ENCODE measurements at regions of chr2 and their contacts with region 1.

Region 1: DNA sequence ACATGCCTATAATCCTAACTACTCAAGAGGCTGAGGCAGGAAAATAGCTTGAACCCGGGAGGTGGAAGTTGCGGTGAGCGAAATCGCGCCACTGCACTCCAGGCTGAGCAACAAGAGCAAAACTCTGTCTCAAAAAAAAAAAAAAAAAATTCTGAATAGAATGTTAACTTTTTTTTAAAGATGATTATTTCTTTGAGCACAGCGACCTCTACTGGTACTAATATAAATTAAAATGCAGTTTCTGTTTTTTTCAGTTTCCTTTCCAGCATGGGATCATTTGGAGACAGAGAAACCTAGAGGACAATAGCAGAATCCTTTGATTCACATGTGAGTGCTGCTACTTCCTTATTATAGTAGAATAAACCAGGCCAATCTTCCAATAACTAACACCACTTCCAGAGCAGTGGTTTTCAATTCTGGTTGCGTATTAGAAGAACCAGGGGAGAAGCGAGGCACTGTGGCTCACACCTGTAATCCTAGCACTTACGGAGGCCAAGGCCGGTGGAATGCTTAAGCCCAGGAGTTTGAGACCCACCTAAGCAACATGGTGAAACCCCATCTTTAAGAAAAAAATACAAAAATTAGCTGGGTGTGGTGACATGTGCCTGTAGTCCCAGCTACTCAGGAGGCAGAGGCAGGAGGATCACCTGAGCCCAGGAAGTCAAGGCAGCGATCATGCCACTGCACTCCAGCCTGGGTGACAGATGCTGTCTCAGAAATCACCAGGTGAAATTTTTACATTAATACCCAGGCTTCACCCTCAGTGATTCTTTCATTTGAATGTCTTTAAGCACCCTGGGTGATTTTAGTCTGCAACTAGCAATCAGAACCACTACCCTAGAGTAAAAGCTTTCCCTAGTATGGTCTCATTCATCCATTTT is 10.1 kb downstream of the SRSF7 start:
- DNase-seq: no peak
- H3K4me3 Mint-ChIP-seq: no peak overlapping the region
- H3K27ac Mint-ChIP-seq: no peak overlapping the region
- H3K4me1 Mint-ChIP-seq: peaks cover 24% of the 10 kb centered on the region
- H3K27me3 Mint-ChIP-seq: no peaks in the 10 kb centered on the region

Region 2: GRCh38 chr2:38274286-38275276 is 466.5 kb before region 1 on chr2:
- intact Hi-C with region 1: no loop called
- DNase-seq: no peak
- H3K4me3 Mint-ChIP-seq: no peak overlapping the region
- H3K27ac Mint-ChIP-seq: no peak overlapping the region
- H3K4me1 Mint-ChIP-seq: peaks cover 12% of the 10 kb centered on the region
- H3K27me3 Mint-ChIP-seq: peaks cover 5% of the 10 kb centered on the region

Region 3: GRCh38 chr2:38581193-38582147 is 159.6 kb before region 1 on chr2:
- intact Hi-C with region 1: loop called (anchors 5 kb)
- DNase-seq: no peak
- H3K4me3 Mint-ChIP-seq: no peak overlapping the region
- H3K27ac Mint-ChIP-seq: peak overlapping the region; percentile 15
- H3K4me1 Mint-ChIP-seq: peaks cover 39% of the 10 kb centered on the region
- H3K27me3 Mint-ChIP-seq: no peaks in the 10 kb centered on the region